Activated CD4-positive, alpha-beta memory T cell treated with anti-CD3 and anti-CD28 coated beads for 36 hours (primary cell): ENCODE measurements at regions of chr6 and their contacts with region 1.

Region 1: DNA sequence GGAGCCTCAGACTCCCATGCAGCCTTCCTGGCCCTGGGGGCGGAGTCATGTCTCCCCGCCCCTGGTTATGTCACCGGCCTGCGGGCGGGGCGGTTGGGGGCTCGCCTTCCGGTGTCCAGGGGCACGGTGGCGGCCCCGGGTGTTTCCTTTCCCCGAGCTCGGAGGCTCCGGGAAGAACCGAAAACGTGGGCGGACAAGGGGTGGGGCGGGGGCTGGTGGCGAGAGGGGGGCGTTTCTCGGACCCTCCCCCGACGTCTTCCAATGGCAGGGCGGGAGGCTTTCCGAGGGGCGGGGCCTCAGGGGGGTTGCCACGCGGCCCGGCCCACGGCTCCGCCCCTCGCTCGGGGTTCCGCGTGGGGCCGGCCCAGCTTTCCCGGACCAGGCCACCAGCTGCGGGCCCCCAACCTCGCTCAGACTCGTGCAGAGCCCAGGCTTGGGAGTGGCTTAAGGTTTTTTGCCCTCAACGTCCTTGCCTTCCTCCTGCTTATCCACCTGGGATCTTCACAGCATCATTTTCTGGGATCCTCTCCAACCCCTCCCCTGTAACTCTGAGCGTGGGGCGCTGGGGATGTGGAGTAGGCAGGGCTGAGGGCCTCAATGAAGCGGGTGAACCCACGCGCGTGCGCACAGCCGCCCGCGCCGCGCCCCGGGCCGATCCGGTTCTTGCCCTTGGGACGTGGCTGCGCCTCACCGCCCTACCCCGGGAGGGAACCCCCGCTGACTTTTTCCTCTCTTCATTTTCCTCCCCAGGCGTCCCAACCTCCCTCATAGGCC is 2.1 kb upstream of the NRN1 start:
- DNase-seq: peak; percentile 73
- H3K4me3 Mint-ChIP-seq: peak overlapping the region; percentile 73
- H3K27ac Mint-ChIP-seq: no peak overlapping the region
- H3K4me1 Mint-ChIP-seq: peaks cover 32% of the 10 kb centered on the region
- H3K27me3 Mint-ChIP-seq: peaks cover 52% of the 10 kb centered on the region

Region 2: DNA sequence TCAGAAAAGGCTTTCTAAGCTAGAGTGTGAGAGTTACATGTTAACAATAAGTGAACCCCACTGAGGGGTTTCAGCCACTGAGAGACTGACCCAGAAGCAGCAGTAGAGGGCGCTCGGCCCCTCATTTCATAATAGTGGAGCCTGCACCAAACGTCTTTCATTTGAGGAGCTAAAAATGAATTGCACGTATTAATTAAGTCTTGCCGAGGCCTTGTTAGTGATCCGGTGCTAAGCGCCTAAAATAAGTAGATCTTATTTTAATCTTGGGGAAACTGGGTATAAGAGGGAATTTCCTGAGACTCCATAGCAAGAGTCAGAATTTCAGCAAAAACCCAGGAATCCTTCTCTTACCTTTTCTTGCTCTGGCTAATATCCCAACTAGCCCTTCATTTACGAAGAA is 537.8 kb before region 1 on chr6:
- CTCF ChIA-PET with region 1: interaction called, 4 read pairs
- POLR2A ChIA-PET with region 1: no interaction called
- intact Hi-C with region 1: loop called (anchors 5 kb)
- DNase-seq: peak; percentile 70
- H3K4me3 Mint-ChIP-seq: no peak overlapping the region
- H3K27ac Mint-ChIP-seq: no peak overlapping the region
- H3K4me1 Mint-ChIP-seq: no peaks in the 10 kb centered on the region
- H3K27me3 Mint-ChIP-seq: no peaks in the 10 kb centered on the region

Region 3: GRCh38 chr6:5813625-5814027 is 195.2 kb before region 1 on chr6:
- CTCF ChIA-PET with region 1: interaction called, 3 read pairs
- POLR2A ChIA-PET with region 1: no interaction called
- intact Hi-C with region 1: loop called (anchors 10 kb)
- DNase-seq: peak; percentile 38
- H3K4me3 Mint-ChIP-seq: no peak overlapping the region
- H3K27ac Mint-ChIP-seq: peak overlapping the region; percentile 19
- H3K4me1 Mint-ChIP-seq: peaks cover 24% of the 10 kb centered on the region
- H3K27me3 Mint-ChIP-seq: no peaks in the 10 kb centered on the region

Region 4: DNA sequence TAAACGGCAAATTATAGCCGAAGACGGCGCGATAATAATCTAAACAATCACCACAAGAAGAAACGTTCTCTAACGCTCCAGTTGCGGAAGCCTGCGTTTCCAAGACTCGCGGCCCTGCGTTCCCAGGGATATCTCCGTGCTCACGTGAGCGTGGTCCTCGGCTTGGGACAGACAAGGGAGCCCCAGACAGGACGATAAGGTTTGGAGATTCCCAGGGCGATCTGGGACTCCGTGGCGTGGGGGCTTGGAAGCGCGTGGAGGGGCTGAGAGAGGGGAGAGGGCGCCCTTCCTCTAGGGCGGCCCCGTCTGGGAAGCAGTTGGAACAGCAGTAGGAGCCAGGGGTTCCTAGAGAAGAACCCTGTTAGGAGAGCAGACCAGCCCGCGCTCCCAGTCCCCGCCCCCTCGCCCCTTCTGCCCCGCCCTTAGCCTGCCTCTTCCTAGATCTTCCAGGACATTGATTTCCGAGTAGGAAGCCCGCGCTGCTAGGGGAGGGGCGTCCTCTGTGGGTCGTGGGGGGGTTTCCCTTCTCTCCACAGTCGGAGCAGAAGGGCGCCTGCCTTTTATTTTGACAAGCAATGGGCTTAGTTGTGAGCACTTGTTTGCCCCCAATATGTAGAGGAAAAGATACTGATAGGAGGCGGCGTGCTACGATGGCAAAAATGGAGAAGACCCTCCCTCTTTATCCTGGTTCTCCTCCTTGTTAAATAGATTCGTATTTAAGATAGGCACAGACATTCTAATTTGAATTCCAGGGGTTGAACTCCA is 12.7 kb before region 1 on chr6:
- CTCF ChIA-PET with region 1: interaction called, 7 read pairs
- POLR2A ChIA-PET with region 1: interaction called, 5 read pairs
- intact Hi-C with region 1: loop called (anchors 1 kb)
- DNase-seq: peak; percentile 31
- H3K4me3 Mint-ChIP-seq: peak overlapping the region; percentile 75
- H3K27ac Mint-ChIP-seq: no peak overlapping the region
- H3K4me1 Mint-ChIP-seq: peaks cover 41% of the 10 kb centered on the region
- H3K27me3 Mint-ChIP-seq: peaks cover 75% of the 10 kb centered on the region

Region 5: DNA sequence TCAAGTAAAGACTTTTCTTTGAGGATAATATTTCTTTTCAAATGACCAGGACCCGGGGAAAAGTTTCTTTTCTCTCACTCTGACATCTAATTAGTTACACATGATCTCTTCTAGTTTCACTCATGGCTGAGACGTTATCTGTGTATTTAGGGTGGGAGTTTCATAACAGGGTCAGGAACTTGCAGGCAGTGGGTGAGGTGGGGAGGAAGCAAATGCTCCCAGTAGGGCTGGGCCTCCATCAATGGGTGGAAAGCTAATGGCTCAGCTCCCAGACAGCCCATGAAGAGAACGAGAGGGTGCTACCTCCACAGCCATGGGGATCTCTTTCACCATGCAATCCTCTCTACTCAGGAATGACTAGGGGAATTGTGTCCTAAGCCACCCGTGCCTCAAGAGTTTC is 192.4 kb after region 1 on chr6:
- CTCF ChIA-PET with region 1: no interaction called
- POLR2A ChIA-PET with region 1: no interaction called
- intact Hi-C with region 1: no loop called
- DNase-seq: no peak
- H3K4me3 Mint-ChIP-seq: no peak overlapping the region
- H3K27ac Mint-ChIP-seq: no peak overlapping the region
- H3K4me1 Mint-ChIP-seq: no peaks in the 10 kb centered on the region
- H3K27me3 Mint-ChIP-seq: peaks cover 14% of the 10 kb centered on the region

Region 6: DNA sequence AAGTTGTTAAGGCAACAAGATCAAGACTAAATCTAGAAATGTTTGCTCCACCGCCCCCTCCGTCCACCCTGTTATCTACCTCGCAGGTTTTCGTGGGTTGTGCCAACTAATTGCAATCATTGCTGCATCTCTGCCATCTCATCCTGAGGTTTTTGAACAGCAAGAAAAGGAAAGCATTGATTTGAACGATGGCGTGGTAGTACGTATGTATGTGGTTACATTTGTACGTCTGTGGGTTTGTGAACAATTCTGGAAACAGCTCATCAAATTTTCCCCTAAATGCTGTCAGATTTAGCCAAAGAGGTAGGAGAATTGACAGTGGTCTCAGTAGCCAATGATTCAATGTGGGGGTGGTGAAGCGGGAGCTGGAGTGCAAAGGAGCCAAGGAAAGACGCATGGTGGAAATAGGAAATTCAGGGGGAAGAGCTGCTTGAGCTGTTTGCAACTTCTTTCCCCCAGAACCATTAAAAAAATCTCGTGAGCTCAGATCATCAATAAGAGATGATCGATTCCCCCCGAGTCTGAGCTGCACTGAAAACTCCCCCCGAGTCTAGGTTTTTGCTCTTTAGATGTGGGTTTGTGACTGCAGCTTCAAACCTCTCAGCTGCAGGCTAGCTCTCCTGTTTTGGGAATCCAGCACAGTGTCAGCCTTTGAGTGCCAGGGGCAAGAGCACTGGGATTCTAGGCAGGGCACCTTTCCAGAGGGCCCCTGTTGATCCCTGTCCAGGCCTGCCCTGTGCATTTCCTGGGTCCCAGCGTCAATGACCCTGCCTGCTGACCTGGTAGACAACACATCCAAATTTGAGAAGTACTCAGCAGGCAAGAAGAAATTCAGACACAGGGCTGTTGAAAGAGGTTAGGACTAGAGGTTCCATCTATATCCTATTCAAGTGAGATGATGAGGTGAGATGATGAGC is 507.1 kb after region 1 on chr6:
- CTCF ChIA-PET with region 1: no interaction called
- POLR2A ChIA-PET with region 1: no interaction called
- intact Hi-C with region 1: loop called (anchors 10 kb)
- DNase-seq: peak; percentile 80
- H3K4me3 Mint-ChIP-seq: no peak overlapping the region
- H3K27ac Mint-ChIP-seq: no peak overlapping the region
- H3K4me1 Mint-ChIP-seq: peaks cover 16% of the 10 kb centered on the region
- H3K27me3 Mint-ChIP-seq: peaks cover 77% of the 10 kb centered on the region

Region 7: GRCh38 chr6:6547110-6547879 is 538.5 kb after region 1 on chr6:
- CTCF ChIA-PET with region 1: interaction called, 4 read pairs
- POLR2A ChIA-PET with region 1: no interaction called
- intact Hi-C with region 1: loop called (anchors 5 kb)
- DNase-seq: peak; percentile 88
- H3K4me3 Mint-ChIP-seq: peak overlapping the region; percentile 57
- H3K27ac Mint-ChIP-seq: peak overlapping the region; percentile 3
- H3K4me1 Mint-ChIP-seq: peaks cover 3% of the 10 kb centered on the region
- H3K27me3 Mint-ChIP-seq: peaks cover 44% of the 10 kb centered on the region